Body of pancreas (tissue), 4 donors: ENCODE measurements at regions of chr10 and their contacts with region 1.

Region 1: GRCh38 chr10:87734987-87735827 is 75.5 kb downstream of the PAPSS2 start:
- DNase-seq: peak; percentile 18 to 38 (median 26)
- ATAC-seq: peak; percentile 80
- H3K4me3 ChIP-seq: no peak overlapping the region
- H3K27ac ChIP-seq: no peak overlapping the region
- H3K4me1 ChIP-seq: peaks cover 15% of the 10 kb centered on the region
- H3K27me3 ChIP-seq: no peaks in the 10 kb centered on the region
- CTCF ChIP-seq: peak; percentile 49 to 90 (median 82)
- POLR2A ChIP-seq: no peak

Region 2: DNA sequence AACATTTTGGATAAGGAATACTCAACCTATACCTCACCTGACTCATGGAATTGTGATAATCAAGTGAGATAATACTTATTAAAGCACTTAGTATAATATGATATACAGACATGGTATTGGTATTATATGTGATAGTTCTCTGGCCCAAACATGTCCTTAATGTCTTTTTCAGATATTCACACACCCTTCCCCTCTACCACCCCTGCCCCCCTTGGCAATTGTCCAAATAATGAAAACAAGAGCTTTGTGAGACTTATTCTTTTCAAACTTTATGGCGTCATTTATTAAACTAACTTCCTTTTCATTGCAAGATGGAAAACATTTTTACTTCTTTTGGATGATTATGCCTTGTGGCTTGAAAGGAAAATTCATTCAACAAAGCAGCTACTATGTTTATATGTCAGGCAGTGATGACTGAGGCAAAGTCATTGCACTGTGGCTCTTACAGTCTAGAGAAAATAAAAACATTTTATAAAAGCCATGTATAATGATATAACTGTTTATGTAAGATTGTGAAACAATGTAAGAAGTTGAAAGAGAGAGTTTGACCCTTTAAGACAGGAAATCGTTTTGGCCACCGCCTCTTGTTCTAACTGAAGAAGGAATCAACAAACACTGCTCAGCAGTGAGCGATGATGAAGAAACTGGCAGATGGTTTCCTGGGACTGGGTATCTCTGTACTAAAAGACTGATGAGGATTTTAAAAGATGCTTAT is 203.1 kb before region 1 on chr10:
- intact Hi-C with region 1: loop called (anchors 10 kb)
- DNase-seq: peak in 1 of 4 donors; percentile 32
- ATAC-seq: peak; percentile 35
- H3K4me3 ChIP-seq: no peak overlapping the region
- H3K27ac ChIP-seq: no peak overlapping the region
- H3K4me1 ChIP-seq: peaks cover 8% of the 10 kb centered on the region
- H3K27me3 ChIP-seq: no peaks in the 10 kb centered on the region
- CTCF ChIP-seq: no peak
- POLR2A ChIP-seq: no peak

Region 3: GRCh38 chr10:87659571-87660483 is 75.4 kb before region 1 on chr10 and contains the start of gene PAPSS2:
- intact Hi-C with region 1: loop called (anchors 5 kb)
- DNase-seq: peak; percentile 64 to 76 (median 70)
- ATAC-seq: peak; percentile 72
- H3K4me3 ChIP-seq: peak within 1 kb of the TSS; percentile 73 to 90
- H3K27ac ChIP-seq: peak within 1 kb of the TSS; percentile 41 to 88 (median 80)
- H3K4me1 ChIP-seq: peaks cover 35% of the 10 kb centered on the region
- H3K27me3 ChIP-seq: no peaks in the 10 kb centered on the region
- CTCF ChIP-seq: peak in 1 of 7 experiments; percentile 10
- POLR2A ChIP-seq: peak; percentile 58 to 80 (median 77)
- total RNA-seq, gene PAPSS2: 16.9 to 17.5 TPM

Region 4: DNA sequence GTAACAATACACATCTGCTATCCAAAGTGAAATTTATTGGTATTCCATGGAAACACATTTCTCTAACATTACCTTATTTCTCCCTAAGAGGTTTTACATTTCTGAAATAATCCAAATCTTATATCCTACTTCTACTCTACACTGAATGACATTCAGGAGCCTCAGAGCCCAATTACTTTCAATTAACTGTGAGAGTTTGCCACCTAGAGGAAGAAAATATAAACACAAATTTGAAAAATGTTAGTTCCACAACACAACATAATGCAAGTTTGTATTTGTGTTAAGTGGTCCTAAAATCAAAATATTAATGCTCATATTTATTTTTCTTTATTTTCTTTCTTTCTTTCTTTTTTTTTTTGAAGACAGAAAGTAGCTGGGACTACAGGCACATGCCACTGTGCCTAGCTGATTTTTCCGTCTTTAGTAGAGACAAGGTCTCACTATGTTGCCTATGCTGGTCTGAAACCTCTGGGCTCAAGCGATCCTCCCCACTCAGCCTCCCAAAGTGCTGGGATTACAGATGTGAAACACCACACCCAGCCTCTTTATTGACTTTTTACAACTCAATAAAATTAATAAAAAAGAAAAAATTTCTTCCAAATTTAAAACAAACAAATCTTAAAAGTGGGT is 36.8 kb after region 1 on chr10:
- intact Hi-C with region 1: no loop called
- DNase-seq: no peak
- ATAC-seq: no peak
- H3K4me3 ChIP-seq: no peak overlapping the region
- H3K27ac ChIP-seq: no peak overlapping the region
- H3K4me1 ChIP-seq: no peaks in the 10 kb centered on the region
- H3K27me3 ChIP-seq: no peaks in the 10 kb centered on the region
- CTCF ChIP-seq: peak in 6 of 7 experiments; percentile 34 to 65 (median 52)
- POLR2A ChIP-seq: no peak